Activated CD8-positive, alpha-beta T cell treated with anti-CD3 and anti-CD28 coated beads for 36 hours (primary cell): ENCODE measurements at regions of chr7 and their contacts with region 1.

Region 1: GRCh38 chr7:151085691-151086620 is at the start of gene AGAP3:
- DNase-seq: peak; percentile 50
- ATAC-seq: peak; percentile 6
- H3K4me3 Mint-ChIP-seq: peak within 1 kb of the TSS; percentile 80
- H3K27ac Mint-ChIP-seq: peak within 1 kb of the TSS; percentile 68
- H3K4me1 Mint-ChIP-seq: peaks cover 35% of the 10 kb centered on the region
- H3K27me3 Mint-ChIP-seq: peaks cover 22% of the 10 kb centered on the region
- CTCF ChIP-seq: no peak
- total RNA-seq, gene AGAP3: 20.6 to 22.0 TPM

Region 2: DNA sequence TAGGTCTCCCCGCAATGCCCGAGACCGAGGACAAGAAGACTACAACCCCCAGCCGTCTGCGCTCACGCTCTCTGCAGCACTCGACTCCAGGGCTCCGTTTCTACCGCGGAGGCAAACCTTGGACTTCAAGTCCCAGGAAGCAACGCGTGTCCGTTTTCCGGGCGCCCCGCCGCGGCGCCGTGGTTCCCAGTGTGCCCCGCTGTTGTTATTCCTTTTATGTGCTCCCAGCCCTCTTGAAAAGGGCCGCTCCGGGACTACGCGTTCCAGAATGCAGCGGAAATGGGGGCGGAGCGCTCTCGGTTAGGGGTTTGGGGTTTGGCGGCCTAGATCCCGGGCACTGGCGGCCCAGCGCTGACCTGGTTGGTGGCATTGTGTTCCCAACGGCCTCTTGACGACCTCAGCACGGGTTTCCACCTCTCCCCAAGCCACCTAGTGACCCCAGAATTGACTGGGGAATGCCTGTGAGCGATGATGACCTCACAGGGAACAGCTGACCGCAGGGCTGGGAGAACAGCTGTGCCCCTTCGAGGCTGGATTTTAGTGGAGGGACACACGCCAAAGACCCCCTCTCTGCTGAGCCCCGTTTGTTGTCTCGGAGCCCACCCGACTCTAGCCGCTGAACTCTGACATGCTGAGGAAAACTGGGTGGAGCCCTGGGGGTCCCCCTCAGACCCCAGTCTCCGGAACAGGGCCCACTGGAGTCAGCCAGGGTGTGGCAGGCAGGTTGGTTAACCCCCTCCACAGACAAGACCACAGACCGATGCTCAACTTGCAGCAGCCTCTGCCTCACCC is 27.8 kb before region 1 on chr7:
- CTCF ChIA-PET with region 1: interaction called, 6 read pairs
- POLR2A ChIA-PET with region 1: interaction called, 4 read pairs
- intact Hi-C with region 1: loop called (anchors 2 kb)
- DNase-seq: peak; percentile 99
- ATAC-seq: peak; percentile 95
- H3K4me3 Mint-ChIP-seq: peak overlapping the region; percentile 95
- H3K27ac Mint-ChIP-seq: peak overlapping the region; percentile 89
- H3K4me1 Mint-ChIP-seq: peaks cover 35% of the 10 kb centered on the region
- H3K27me3 Mint-ChIP-seq: no peaks in the 10 kb centered on the region
- CTCF ChIP-seq: no peak

Region 3: GRCh38 chr7:151152643-151153513 is 66.9 kb after region 1 on chr7:
- CTCF ChIA-PET with region 1: no interaction called
- POLR2A ChIA-PET with region 1: no interaction called
- intact Hi-C with region 1: no loop called
- DNase-seq: no peak
- ATAC-seq: no peak
- H3K4me3 Mint-ChIP-seq: no peak overlapping the region
- H3K27ac Mint-ChIP-seq: no peak overlapping the region
- H3K4me1 Mint-ChIP-seq: no peaks in the 10 kb centered on the region
- H3K27me3 Mint-ChIP-seq: peaks cover 27% of the 10 kb centered on the region
- CTCF ChIP-seq: no peak